AG04449 (cell line): ENCODE measurements at regions of chr7 and their contacts with region 1.

Region 1: GRCh38 chr7:134355927-134356326 is 39.2 kb upstream of the SLC35B4 start:
- DNase-seq: no peak
- H3K4me3 ChIP-seq: no peak overlapping the region
- CTCF ChIP-seq: no peak

Region 2: DNA sequence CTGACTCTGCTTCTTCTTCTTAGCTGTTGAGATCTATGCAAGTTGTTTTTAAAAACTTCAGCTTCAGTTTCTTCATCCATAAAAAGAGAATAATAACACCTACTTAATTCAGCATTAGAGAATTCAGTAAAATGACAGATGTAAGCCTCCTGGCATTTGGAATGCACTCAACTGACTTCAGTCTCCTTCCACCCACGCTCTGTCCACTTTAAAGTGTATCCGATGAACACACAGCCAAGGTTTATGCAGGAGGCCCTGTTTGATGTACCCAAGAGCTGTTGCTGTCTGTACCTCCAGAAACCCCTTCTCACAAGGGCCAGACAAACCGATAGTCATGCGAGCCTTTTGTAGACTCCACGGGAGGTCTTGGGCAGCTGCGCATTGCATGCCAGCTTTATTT is 12.1 kb before region 1 on chr7:
- CTCF ChIA-PET with region 1: interaction called, 14 read pairs
- POLR2A ChIA-PET with region 1: no interaction called
- DNase-seq: no peak
- H3K4me3 ChIP-seq: no peak overlapping the region
- CTCF ChIP-seq: no peak

Region 3: DNA sequence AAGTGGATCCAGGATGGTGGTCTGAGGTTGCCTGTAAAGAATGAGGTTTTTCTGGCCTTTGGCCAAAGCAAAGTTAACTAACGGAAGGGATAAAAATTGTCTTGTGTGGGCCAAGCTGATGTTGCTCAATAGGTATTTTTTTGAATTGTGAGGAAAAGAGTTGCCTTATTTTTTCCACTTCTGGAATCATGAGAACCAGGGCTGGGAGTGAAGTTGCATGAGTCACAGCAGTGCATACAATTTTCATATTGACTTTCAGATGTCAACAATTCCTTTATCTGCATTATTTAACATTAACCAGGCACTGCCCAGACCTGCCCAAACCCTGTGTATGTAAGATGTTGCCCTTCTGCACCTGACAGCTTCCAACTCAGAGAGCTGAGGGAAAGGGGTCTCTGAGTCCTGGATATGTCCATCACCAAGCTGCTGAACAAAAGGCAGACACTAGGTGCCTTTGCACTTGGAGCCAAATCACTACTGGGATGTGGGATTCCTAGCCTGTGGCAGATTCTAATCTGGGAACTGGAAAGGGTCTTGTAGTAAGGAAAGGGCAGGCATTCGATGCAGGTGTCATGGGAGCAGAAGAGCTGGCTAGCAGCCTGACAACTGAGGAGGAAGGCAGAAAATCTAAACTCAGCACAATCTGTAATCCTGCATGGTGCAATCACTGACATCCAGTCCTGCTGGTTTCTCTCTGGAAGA is 13.1 kb after region 1 on chr7:
- CTCF ChIA-PET with region 1: interaction called, 35 read pairs
- POLR2A ChIA-PET with region 1: no interaction called
- DNase-seq: peak; percentile 51
- H3K4me3 ChIP-seq: no peak overlapping the region
- CTCF ChIP-seq: no peak